Naive thymus-derived CD4-positive, alpha-beta T cell (primary cell): ENCODE measurements at regions of chr2 and their contacts with region 1.

Region 1: DNA sequence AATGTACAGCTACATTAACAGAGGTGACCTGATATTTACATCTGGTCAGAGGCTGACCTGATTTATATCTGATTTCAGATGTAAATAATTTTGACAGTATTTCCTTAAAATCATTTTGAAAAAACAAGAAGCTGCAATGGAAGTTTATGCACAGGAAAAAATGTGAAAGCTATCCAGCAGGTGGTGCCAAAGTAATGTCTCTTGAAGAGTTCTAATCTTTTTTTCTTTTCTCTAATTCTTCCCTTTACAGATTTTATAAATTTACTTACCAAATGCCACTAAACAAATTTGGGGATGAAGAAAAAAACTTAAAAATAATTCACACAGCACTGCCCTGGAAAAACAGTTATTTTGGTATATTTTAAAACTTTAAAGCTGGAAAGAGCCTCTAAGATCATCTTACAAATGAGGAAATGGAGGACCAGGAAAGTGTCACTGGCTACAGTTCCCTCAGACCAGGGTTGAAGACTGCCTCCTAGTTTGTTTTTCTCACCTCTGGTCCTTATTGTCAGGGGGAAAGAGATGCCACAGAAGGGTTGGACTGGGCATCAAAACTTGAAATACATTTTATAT is 16.4 kb upstream of the FBLN7 start:
- DNase-seq: peak in 7 of 9 donors; percentile 33 to 68 (median 56)
- ATAC-seq: no peak
- H3K4me3 ChIP-seq: no peak overlapping the region
- H3K4me3 Mint-ChIP-seq: no peak overlapping the region
- H3K27ac ChIP-seq: no peak overlapping the region
- H3K27ac Mint-ChIP-seq: peak overlapping the region in 3 of 9 donors; percentile 40 to 62 (median 47)
- H3K4me1 ChIP-seq: no peaks in the 10 kb centered on the region
- H3K4me1 Mint-ChIP-seq: peaks cover 0 to 8% (median 0%) of the 10 kb centered on the region in 7 donors
- H3K27me3 ChIP-seq: no peaks in the 10 kb centered on the region
- H3K27me3 Mint-ChIP-seq: no peaks in the 10 kb centered on the region

Region 2: GRCh38 chr2:112166806-112167499 is 45.2 kb after region 1 on chr2:
- CTCF ChIA-PET with region 1: no interaction called
- POLR2A ChIA-PET with region 1: no interaction called
- intact Hi-C with region 1: loop called in 1 of 2 experiments (anchors 1 kb)
- DNase-seq: peak in 2 of 9 donors; percentile 22 to 25
- ATAC-seq: peak; percentile 58
- H3K4me3 ChIP-seq: no peak overlapping the region
- H3K4me3 Mint-ChIP-seq: peak overlapping the region in 1 of 10 donors; percentile 7
- H3K27ac ChIP-seq: no peak overlapping the region
- H3K27ac Mint-ChIP-seq: peak overlapping the region; percentile 17 to 88 (median 33)
- H3K4me1 ChIP-seq: no peaks in the 10 kb centered on the region
- H3K4me1 Mint-ChIP-seq: peaks cover 7 to 22% (median 10%) of the 10 kb centered on the region in 7 donors
- H3K27me3 ChIP-seq: no peaks in the 10 kb centered on the region
- H3K27me3 Mint-ChIP-seq: no peaks in the 10 kb centered on the region

Region 3: GRCh38 chr2:112242384-112242783 is 120.6 kb after region 1 on chr2:
- CTCF ChIA-PET with region 1: interaction called, 5 read pairs
- POLR2A ChIA-PET with region 1: no interaction called
- intact Hi-C with region 1: loop called in 1 of 2 experiments (anchors 1 kb)
- DNase-seq: peak in 6 of 9 donors; percentile 14 to 39 (median 30)
- ATAC-seq: peak; percentile 53
- H3K4me3 ChIP-seq: no peak overlapping the region
- H3K4me3 Mint-ChIP-seq: peak overlapping the region in 8 of 10 donors; percentile 41 to 76 (median 60)
- H3K27ac ChIP-seq: peak overlapping the region; percentile 34
- H3K27ac Mint-ChIP-seq: peak overlapping the region in 8 of 9 donors; percentile 59 to 85 (median 76)
- H3K4me1 ChIP-seq: peaks cover 0 to 23% of the 10 kb centered on the region in 2 donors
- H3K4me1 Mint-ChIP-seq: peaks cover 13 to 59% (median 57%) of the 10 kb centered on the region in 7 donors
- H3K27me3 ChIP-seq: no peaks in the 10 kb centered on the region
- H3K27me3 Mint-ChIP-seq: no peaks in the 10 kb centered on the region

Region 4: GRCh38 chr2:112259509-112260294 is 137.9 kb after region 1 on chr2:
- CTCF ChIA-PET with region 1: interaction called, 7 read pairs
- POLR2A ChIA-PET with region 1: interaction called, 10 read pairs
- intact Hi-C with region 1: loop called (anchors 1 kb)
- DNase-seq: peak; percentile 63 to 85 (median 79)
- ATAC-seq: peak; percentile 69
- H3K4me3 ChIP-seq: peak overlapping the region; percentile 36
- H3K4me3 Mint-ChIP-seq: peak overlapping the region; percentile 19 to 78 (median 70)
- H3K27ac ChIP-seq: no peak overlapping the region
- H3K27ac Mint-ChIP-seq: peak overlapping the region; percentile 16 to 91 (median 70)
- H3K4me1 ChIP-seq: peaks cover 0 to 6% of the 10 kb centered on the region in 2 donors
- H3K4me1 Mint-ChIP-seq: peaks cover 4 to 23% (median 7%) of the 10 kb centered on the region in 7 donors
- H3K27me3 ChIP-seq: no peaks in the 10 kb centered on the region
- H3K27me3 Mint-ChIP-seq: peaks cover 0 to 9% (median 5%) of the 10 kb centered on the region in 5 donors

Region 5: DNA sequence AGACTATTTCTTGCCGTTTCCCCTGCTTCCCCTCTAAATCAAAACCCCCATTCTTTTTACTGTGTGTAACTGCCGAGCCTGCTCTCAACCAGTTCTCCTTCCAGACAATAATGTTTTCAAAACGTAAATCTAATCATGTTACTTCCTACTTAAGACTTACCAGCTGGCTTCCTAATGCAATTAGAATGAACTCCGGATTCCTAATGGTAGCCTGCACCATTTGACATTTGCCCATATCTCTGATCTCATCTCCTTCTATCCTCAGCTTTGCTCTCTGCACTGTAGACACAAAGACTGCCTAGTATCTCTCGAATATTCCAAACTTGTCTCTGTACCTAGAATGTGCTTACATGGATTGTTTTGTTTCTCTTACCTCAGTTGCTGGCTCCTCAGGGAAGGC is 373.1 kb after region 1 on chr2:
- CTCF ChIA-PET with region 1: no interaction called
- POLR2A ChIA-PET with region 1: no interaction called
- intact Hi-C with region 1: loop called in 1 of 2 experiments (anchors 10 kb)
- DNase-seq: no peak
- ATAC-seq: no peak
- H3K4me3 ChIP-seq: no peak overlapping the region
- H3K4me3 Mint-ChIP-seq: no peak overlapping the region
- H3K27ac ChIP-seq: no peak overlapping the region
- H3K27ac Mint-ChIP-seq: no peak overlapping the region
- H3K4me1 ChIP-seq: no peaks in the 10 kb centered on the region
- H3K4me1 Mint-ChIP-seq: peaks cover 0 to 8% (median 0%) of the 10 kb centered on the region in 7 donors
- H3K27me3 ChIP-seq: no peaks in the 10 kb centered on the region
- H3K27me3 Mint-ChIP-seq: no peaks in the 10 kb centered on the region